Vagina (tissue), 2 donors: ENCODE measurements at regions of chr6 and their contacts with region 1.

Region 1: GRCh38 chr6:37092923-37093920 is 76.7 kb upstream of the PIM1 start:
- DNase-seq: no peak
- H3K4me3 ChIP-seq: no peak overlapping the region
- H3K27ac ChIP-seq: no peak overlapping the region
- H3K4me1 ChIP-seq: peaks cover 26% of the 10 kb centered on the region
- H3K27me3 ChIP-seq: no peaks in the 10 kb centered on the region
- CTCF ChIP-seq: no peak
- POLR2A ChIP-seq: no peak

Region 2: GRCh38 chr6:37987018-37987417 is 893.8 kb after region 1 on chr6:
- intact Hi-C with region 1: loop called (anchors 10 kb)
- DNase-seq: no peak
- H3K4me3 ChIP-seq: no peak overlapping the region
- H3K27ac ChIP-seq: no peak overlapping the region
- H3K4me1 ChIP-seq: peaks cover 66% of the 10 kb centered on the region
- H3K27me3 ChIP-seq: no peaks in the 10 kb centered on the region
- CTCF ChIP-seq: no peak
- POLR2A ChIP-seq: no peak